ENCODE measurements at regions of chr12 and their contacts with region 1.

Region 1: DNA sequence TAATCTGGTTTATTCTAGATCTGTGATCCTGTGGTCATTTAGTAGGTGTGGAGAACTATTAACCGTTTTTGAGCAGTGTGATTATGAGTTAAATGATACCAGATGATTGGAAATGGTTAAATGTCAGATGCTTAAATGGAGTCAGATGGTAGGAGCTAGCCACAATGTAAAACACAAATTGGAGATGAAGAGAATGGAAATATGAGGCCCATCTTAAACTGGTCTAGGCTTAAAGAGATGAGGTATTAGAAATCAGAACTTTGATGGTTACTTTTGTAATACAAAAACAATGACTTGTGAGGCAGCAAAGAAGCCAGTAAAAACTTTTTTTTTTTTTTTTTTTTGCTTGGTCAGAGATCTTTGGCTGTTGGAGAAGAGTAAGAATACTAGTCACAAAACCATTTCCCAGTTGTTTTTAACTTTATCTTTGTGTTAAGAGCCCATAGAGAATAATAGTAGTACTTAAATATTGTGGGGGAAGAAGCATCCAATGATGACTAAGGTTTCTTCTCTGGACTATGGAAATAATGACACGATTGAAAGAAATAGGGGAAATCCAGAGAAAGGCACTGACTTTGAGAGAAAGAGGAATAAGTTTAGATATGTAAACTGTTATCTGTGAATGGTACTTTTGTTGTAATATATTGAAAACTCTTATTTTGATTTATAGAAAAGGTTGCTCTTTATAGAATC is 95.9 kb downstream of the WNK1 start:
- DNase-seq: no peak
- H3K4me3 Mint-ChIP-seq: no peak overlapping the region
- H3K27ac Mint-ChIP-seq: peak overlapping the region; percentile 68
- H3K4me1 Mint-ChIP-seq: peaks cover 53% of the 10 kb centered on the region
- H3K27me3 Mint-ChIP-seq: no peaks in the 10 kb centered on the region

Region 2: DNA sequence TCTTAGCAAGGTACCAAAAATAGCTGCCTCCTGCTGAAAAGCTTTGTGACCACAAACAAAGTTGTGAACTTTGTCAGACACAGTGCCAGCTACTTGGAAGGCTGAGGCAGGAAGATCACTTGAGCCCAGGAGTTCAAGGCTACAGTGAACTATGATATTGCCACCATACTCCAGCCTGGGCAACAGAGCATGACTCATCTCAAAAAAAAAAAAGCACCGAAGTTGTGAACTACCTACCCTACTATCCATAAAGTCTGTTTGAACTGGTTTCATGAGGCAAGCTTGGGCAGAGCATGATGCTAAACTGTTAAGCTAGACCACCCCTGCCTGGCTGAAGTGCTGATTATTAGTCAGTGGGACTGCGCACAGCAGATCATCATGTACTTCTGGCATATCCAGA is 25.6 kb after region 1 on chr12:
- CTCF ChIA-PET with region 1: no interaction called
- POLR2A ChIA-PET with region 1: interaction called, 4 read pairs
- intact Hi-C with region 1: loop called (anchors 1 kb)
- DNase-seq: peak; percentile 14
- H3K4me3 Mint-ChIP-seq: no peak overlapping the region
- H3K27ac Mint-ChIP-seq: peak overlapping the region; percentile 30
- H3K4me1 Mint-ChIP-seq: peaks cover 19% of the 10 kb centered on the region
- H3K27me3 Mint-ChIP-seq: no peaks in the 10 kb centered on the region

Region 3: GRCh38 chr12:884746-885414 is 36.6 kb after region 1 on chr12:
- CTCF ChIA-PET with region 1: no interaction called
- POLR2A ChIA-PET with region 1: no interaction called
- intact Hi-C with region 1: no loop called
- DNase-seq: no peak
- H3K4me3 Mint-ChIP-seq: no peak overlapping the region
- H3K27ac Mint-ChIP-seq: no peak overlapping the region
- H3K4me1 Mint-ChIP-seq: peaks cover 4% of the 10 kb centered on the region
- H3K27me3 Mint-ChIP-seq: no peaks in the 10 kb centered on the region

Region 4: GRCh38 chr12:990661-991349 is 142.5 kb after region 1 on chr12 and contains the start of gene ERC1:
- CTCF ChIA-PET with region 1: no interaction called
- POLR2A ChIA-PET with region 1: no interaction called
- intact Hi-C with region 1: no loop called
- DNase-seq: peak; percentile 87
- H3K4me3 Mint-ChIP-seq: peak within 1 kb of the TSS; percentile 94
- H3K27ac Mint-ChIP-seq: peak within 1 kb of the TSS; percentile 87
- H3K4me1 Mint-ChIP-seq: peaks cover 35% of the 10 kb centered on the region
- H3K27me3 Mint-ChIP-seq: no peaks in the 10 kb centered on the region
- total RNA-seq, gene ERC1: 19.1 to 21.8 TPM